PC-3 (cell line): ENCODE measurements at regions of chr17 and their contacts with region 1.

Region 1: GRCh38 chr17:39401412-39402243 is at the start of gene FBXL20:
- DNase-seq: peak; percentile 86
- ATAC-seq: peak; percentile 63
- H3K4me3 ChIP-seq: peak within 1 kb of the TSS; percentile 96
- H3K27ac ChIP-seq: no peak within 1 kb of the TSS
- H3K4me1 ChIP-seq: peaks cover 29% of the 10 kb centered on the region
- H3K27me3 ChIP-seq: no peaks in the 10 kb centered on the region
- CTCF ChIP-seq: no peak
- total RNA-seq, gene FBXL20: 2.2 and 5.0 TPM in 2 replicates

Region 2: GRCh38 chr17:39281806-39282205 is 119.8 kb before region 1 on chr17:
- CTCF ChIA-PET with region 1: no interaction called
- POLR2A ChIA-PET with region 1: no interaction called
- intact Hi-C with region 1: loop called (anchors 5 kb)
- DNase-seq: no peak
- ATAC-seq: no peak; the same call in 1 of the 2 replicates
- H3K4me3 ChIP-seq: no peak overlapping the region
- H3K27ac ChIP-seq: peak overlapping the region; percentile 43
- H3K4me1 ChIP-seq: peaks cover 15% of the 10 kb centered on the region
- H3K27me3 ChIP-seq: no peaks in the 10 kb centered on the region
- CTCF ChIP-seq: no peak

Region 3: DNA sequence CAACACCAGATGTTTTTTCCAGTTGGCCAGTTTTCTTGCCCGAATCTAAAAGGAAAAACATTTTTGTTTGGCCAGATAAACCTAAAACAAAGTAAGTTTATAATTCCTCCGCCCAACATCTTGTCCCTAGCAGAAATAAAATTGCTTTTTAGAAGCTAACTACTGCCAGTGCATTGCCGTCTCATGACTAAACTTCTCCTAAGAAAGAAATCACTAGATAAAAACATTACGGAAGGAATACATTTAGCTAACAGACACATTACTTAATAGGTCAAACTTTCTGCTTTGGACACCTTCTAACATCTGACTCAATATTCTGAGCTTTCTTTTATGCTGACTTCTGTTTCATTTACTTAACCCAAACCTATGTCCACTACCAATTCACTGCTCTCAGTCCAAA is 36.4 kb before region 1 on chr17:
- CTCF ChIA-PET with region 1: no interaction called
- POLR2A ChIA-PET with region 1: no interaction called
- intact Hi-C with region 1: no loop called
- DNase-seq: no peak
- ATAC-seq: no peak
- H3K4me3 ChIP-seq: no peak overlapping the region
- H3K27ac ChIP-seq: no peak overlapping the region
- H3K4me1 ChIP-seq: no peaks in the 10 kb centered on the region
- H3K27me3 ChIP-seq: no peaks in the 10 kb centered on the region
- CTCF ChIP-seq: no peak

Region 4: DNA sequence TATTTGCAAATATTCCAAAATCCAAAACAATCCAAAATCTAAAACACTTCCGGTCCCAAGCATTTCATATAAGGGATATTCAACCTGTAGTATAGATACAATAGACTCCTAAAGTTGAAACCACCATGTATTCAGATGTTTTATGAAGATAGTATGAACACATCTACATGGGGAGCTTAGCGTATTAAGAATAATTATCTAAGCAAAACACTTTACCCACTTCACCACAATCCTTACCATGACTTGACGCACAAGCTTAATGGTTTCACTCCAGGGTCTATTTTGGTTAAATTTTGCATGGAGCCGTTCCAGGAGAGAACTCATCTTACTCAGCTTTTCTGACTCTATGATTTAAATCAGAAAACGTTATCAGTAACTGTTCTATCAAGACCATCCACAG is 45.9 kb after region 1 on chr17:
- CTCF ChIA-PET with region 1: no interaction called
- POLR2A ChIA-PET with region 1: no interaction called
- intact Hi-C with region 1: no loop called
- DNase-seq: no peak
- ATAC-seq: no peak
- H3K4me3 ChIP-seq: no peak overlapping the region
- H3K27ac ChIP-seq: no peak overlapping the region
- H3K4me1 ChIP-seq: peaks cover 4% of the 10 kb centered on the region; the same call in 1 of the 2 replicates
- H3K27me3 ChIP-seq: no peaks in the 10 kb centered on the region
- CTCF ChIP-seq: no peak

Region 5: DNA sequence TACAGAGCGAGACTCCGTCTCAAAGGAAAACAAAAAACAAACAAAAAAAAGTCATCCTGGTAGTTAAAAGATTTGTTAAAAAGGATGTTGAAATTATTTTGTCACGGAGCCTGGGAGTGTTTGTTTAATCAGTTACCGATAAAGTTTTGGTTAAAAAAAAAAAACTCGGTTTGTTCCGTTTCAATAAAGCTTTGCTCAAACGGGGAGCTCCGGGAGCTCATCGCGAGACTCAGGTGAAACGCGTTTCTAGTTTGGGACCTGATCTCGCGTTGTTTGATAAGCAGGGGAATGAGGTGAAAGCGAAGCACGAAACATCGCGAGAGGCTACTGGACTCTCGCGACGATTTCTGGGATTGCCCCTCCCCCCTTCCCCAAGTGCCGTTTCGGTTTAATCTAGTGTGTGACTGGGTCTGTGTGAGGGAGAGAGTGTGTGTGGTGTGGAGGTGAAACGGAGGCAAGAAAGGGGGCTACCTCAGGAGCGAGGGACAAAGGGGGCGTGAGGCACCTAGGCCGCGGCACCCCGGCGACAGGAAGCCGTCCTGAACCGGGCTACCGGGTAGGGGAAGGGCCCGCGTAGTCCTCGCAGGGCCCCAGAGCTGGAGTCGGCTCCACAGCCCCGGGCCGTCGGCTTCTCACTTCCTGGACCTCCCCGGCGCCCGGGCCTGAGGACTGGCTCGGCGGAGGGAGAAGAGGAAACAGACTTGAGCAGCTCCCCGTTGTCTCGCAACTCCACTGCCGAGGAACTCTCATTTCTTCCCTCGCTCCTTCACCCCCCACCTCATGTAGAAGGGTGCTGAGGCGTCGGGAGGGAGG is 59.7 kb after region 1 on chr17 and contains the start of gene CDK12:
- CTCF ChIA-PET with region 1: no interaction called
- POLR2A ChIA-PET with region 1: no interaction called
- intact Hi-C with region 1: loop called (anchors 5 kb)
- DNase-seq: peak; percentile 99
- ATAC-seq: peak; percentile 81
- H3K4me3 ChIP-seq: peak within 1 kb of the TSS; percentile 76
- H3K27ac ChIP-seq: peak within 1 kb of the TSS; percentile 82
- H3K4me1 ChIP-seq: no peaks in the 10 kb centered on the region
- H3K27me3 ChIP-seq: no peaks in the 10 kb centered on the region
- CTCF ChIP-seq: no peak
- total RNA-seq, gene CDK12: 30.4 and 39.2 TPM in 2 replicates